ENCODE measurements at regions of chr2 and their contacts with region 1.

Region 1: DNA sequence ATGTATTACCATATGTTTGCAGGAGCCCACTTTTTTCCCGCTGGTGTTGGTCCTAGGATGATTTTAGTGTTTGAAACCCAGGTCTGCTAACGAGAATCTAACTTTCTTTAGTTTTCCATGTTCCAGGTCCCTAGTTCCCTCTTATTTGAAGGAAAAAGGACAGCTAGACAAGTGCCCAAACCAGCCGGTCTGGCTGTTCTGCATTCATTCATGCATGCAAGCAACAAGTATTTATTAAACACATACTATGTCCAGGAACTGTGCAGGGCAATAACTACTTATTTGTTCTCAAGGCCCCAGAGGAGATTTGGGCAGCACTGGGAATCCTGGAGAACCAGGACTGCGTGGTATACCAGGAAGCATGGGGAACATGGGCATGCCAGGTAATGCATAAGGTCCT is 35.3 kb upstream of the MFF start:
- DNase-seq: no peak

Region 2: GRCh38 chr2:227267410-227268148 is 22.1 kb before region 1 on chr2:
- intact Hi-C with region 1: loop called in 1 of 2 experiments (anchors 1 kb)
- DNase-seq: no peak

Region 3: DNA sequence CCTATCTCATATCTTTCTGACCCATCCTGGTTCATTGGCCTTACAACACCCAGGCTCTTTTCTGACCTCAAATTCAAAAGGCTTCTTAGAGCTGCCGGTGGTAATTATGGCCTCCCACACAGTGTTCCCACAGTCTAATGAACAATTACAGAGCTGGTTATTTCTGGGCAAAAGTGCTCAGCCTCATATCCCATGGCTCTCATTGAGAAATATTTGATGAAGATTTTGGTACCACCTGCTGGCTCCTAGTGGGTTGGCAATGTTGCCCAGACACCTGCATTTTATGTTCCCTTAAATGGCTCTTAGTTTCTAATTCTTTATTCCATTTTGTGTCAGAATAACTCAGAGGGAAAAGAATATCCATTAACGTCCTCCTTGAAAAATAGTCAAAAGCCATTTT is 288.9 kb after region 1 on chr2:
- intact Hi-C with region 1: no loop called
- DNase-seq: no peak

Measured in posterior vena cava (tissue), 2 donors.